ENCODE measurements at regions of chr21 and their contacts with region 1.

Region 1: GRCh38 chr21:42097860-42098454 is 26.8 kb downstream of the UMODL1 start:
- DNase-seq: peak; percentile 82 to 93
- H3K4me3 ChIP-seq: peak overlapping the region in 1 of 2 donors; percentile 5
- H3K27ac ChIP-seq: peak overlapping the region; percentile 87 to 91
- H3K4me1 ChIP-seq: peaks cover 21 to 45% of the 10 kb centered on the region in 2 donors
- H3K27me3 ChIP-seq: no peaks in the 10 kb centered on the region
- CTCF ChIP-seq: no peak

Region 2: DNA sequence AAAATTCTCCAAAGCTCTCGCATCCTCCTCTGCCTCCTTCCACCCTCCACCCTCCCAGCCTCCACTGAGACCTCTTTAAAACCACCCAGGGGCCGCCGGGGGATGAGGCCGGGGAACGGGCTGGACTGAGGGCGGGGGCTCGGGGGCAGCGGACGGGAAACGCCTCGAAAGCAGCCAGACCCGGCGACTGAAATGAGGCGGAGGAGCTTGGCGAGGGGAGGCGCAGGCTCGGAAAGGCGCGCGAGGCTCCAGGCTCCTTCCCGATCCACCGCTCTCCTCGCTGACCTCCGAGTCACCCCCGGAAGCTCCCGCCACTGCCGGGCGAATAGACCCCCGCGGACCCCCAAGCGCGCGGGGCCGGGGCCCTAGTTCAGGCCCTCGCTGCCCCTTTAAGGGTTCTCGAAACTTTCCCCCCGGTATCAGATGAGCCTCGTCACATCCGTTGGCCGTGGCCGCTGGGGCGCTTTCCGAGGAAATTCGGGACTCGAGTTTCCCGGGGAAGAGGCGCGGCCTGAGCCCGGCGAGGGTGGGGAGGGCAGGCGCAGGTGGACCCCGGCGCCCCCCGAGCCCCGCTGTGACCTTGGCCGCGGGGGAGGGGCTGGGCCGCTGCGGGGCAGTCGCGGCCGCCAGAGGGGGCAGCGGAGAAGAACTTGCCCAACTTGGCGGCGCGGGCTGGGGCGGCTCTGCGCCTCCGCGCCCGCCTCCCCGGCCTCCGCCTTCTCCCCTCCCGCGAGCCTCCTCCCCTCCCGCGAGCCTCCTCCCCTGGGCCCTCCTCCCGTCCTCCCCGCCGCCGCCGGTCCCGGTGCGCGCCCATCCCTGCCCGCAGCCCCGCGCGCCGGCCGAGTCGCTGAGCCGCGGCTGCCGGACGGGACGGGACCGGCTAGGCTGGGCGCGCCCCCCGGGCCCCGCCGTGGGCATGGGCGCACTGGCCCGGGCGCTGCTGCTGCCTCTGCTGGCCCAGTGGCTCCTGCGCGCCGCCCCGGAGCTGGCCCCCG is 930.3 kb before region 1 on chr21 and contains the start of gene BACE2:
- intact Hi-C with region 1: loop called (anchors 10 kb)
- DNase-seq: peak in 1 of 2 donors; percentile 91
- H3K4me3 ChIP-seq: peak within 1 kb of the TSS; percentile 92 to 99
- H3K27ac ChIP-seq: peak within 1 kb of the TSS; percentile 98 to 99
- H3K4me1 ChIP-seq: peaks cover 0 to 17% of the 10 kb centered on the region in 2 donors
- H3K27me3 ChIP-seq: no peaks in the 10 kb centered on the region
- CTCF ChIP-seq: peak; percentile 29 to 68 (median 60)
- total RNA-seq, gene BACE2: 151 TPM

Region 3: GRCh38 chr21:41663801-41664788 is 433.9 kb before region 1 on chr21:
- intact Hi-C with region 1: loop called (anchors 10 kb)
- DNase-seq: no peak
- H3K4me3 ChIP-seq: no peak overlapping the region
- H3K27ac ChIP-seq: peak overlapping the region; percentile 37 to 50
- H3K4me1 ChIP-seq: peaks cover 4 to 18% of the 10 kb centered on the region in 2 donors
- H3K27me3 ChIP-seq: no peaks in the 10 kb centered on the region
- CTCF ChIP-seq: no peak

Region 4: DNA sequence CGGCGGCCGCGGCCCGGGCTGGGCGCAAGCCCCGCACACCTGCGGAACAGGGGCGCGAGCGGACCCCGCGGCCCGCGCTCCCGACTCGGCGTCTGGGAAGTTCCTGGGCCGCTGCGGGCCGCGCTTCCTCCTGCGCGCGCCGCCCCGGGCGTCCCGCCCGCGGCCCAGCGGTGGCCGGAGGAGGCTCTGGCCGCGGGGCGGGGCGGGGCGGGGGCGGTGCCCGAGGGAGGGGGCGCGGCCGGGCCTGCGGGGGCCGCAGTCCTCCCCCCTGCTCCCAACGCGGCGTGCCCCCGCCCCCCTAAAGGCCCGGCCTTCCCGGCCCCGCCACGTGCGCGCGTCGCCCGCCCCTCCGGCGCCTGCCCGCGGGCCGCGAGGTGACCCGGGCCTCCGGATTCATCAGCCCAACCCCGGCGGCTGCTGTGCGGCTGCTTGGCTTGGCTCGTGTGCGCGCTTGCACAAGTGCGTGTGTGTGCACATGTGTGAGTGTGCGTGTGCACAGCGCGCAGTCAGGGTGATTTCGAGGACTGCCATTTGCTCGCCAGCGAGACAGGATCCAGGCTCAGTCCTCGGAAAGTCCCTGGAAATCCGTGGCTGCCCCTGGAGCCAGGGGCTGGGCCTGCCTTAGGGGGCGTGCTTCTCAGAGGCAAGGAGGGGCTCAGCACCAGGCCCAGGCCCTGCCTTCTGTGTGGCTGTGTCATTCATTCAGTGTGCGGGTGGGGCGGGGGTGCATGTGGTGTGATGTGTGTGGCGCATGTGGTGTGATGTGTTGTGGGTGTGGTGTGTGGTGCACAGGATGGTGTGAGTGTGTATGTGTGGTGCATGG is 143.9 kb before region 1 on chr21 and contains the start of gene C2CD2:
- intact Hi-C with region 1: loop called (anchors 1 kb)
- DNase-seq: peak in 1 of 2 donors; percentile 83
- H3K4me3 ChIP-seq: peak within 1 kb of the TSS; percentile 96 to 97
- H3K27ac ChIP-seq: peak within 1 kb of the TSS; percentile 86 to 90
- H3K4me1 ChIP-seq: peaks cover 14 to 29% of the 10 kb centered on the region in 2 donors
- H3K27me3 ChIP-seq: no peaks in the 10 kb centered on the region
- CTCF ChIP-seq: no peak
- total RNA-seq, gene C2CD2: 45.0 TPM

Region 5: DNA sequence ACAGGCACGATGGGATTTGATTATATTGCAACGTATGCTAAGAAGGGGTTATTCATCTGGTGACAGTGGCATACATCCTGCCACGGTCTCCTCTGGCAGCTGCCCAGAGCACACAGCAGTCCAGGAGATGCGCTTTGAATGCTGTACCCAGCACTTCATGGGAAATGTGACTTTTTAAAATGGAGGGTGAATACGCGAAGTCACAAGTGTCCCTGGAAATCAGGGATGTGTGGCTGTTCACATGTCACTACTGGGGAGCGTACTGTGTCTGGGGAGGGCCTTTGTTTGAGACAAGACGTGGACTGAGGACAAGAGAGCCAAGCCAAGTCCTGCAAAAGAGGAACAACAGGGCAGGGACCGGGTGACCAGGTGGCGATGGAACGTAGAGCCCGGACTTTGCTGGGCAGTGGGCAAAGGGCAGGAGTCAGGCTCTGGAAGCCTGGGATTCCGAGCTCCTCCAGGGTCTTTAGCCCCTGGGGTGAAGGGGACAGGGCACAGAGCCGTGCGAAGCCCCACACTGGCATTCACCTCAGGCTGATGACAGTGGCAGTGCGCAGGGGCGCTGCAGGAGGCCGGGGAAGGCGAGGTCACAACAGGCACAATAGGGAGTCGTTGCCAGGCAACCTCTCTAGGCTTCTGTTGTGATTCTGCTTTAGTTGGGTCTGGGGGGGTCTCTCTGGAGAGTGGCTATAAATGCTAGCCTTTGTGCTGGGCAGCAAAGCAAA is 76.4 kb before region 1 on chr21:
- intact Hi-C with region 1: no loop called
- DNase-seq: no peak
- H3K4me3 ChIP-seq: no peak overlapping the region
- H3K27ac ChIP-seq: no peak overlapping the region
- H3K4me1 ChIP-seq: no peaks in the 10 kb centered on the region
- H3K27me3 ChIP-seq: no peaks in the 10 kb centered on the region
- CTCF ChIP-seq: no peak

Region 6: DNA sequence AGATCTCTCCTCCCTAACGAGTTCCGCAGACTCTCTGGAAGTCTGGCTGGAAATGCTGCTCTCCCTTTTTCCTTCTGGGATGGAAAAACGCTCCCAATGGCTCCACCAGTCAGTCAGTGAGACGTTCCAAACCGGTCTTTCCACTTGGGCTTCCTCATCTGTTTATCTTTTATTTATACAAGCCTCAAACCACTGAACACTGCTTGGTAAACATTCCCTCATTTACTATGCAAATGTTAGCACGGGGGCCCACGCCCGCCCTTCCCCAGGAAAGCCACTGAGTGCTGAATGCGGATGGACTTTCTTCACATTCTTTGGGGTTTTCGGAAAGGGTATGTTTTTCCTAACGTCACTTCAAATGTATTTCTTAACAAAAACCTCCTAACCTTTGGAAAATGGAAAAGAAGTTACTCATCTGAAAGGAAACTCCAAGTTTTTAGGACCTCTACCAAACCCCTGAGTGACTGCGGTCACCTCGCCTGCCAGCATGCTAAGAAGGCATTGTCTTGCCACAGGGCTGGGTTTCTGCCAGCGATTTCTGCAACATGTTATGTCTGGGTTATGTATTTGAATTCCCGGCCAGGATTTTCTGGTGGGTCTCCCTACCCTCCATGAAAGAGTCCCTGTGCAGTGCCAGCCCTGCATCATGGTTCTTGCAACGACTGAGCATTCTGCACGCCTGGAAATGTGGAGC is 40.8 kb before region 1 on chr21:
- intact Hi-C with region 1: loop called (anchors 1 kb)
- DNase-seq: peak in 1 of 2 donors; percentile 92
- H3K4me3 ChIP-seq: peak overlapping the region in 1 of 2 donors; percentile 41
- H3K27ac ChIP-seq: peak overlapping the region; percentile 87 to 94
- H3K4me1 ChIP-seq: peaks cover 4 to 21% of the 10 kb centered on the region in 2 donors
- H3K27me3 ChIP-seq: no peaks in the 10 kb centered on the region
- CTCF ChIP-seq: no peak

Measured in ascending aorta (tissue), 2 donors.